ENCODE measurements at regions of chr11 and their contacts with region 1.

Region 1: DNA sequence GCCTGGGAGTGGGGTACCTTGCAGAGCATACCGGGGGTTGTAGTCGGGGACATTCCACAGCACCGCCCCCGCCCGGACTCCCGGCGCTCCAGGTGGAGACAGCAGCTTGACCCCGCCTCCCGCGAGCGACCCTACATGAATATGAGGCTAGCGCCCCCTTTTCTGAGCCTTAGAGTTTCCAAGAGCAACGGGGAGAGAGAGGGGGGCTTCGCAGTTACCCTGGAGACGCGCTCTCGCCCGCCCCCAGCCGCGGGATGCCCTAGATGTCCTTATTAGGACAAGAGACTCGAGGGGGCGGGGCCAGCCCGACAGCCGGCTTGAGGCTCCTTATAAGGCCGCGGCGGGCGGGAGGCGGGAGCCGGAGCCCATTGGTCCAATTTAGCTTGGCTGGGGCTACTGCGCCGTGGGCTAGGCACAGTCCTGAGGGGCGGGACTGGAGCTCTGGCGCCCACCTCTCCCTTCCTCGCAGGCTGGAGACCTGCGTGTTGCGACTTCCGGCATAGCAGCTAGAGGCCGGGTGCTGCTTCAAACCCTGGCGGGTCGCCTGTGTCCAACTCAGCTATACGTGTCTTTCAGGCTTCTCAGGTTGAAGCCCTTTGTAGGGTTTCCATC is 927 bp upstream of the MUS81 start:
- DNase-seq: peak; percentile 94 to 96
- ATAC-seq: peak; percentile 65 to 82 (median 66)
- H3K4me3 ChIP-seq: peak overlapping the region; percentile 80
- H3K4me3 Mint-ChIP-seq: peak overlapping the region; percentile 98
- H3K27ac ChIP-seq: peak overlapping the region; percentile 85
- H3K27ac Mint-ChIP-seq: peak overlapping the region; percentile 97 to 98
- H3K4me1 ChIP-seq: peaks cover 51% of the 10 kb centered on the region
- H3K4me1 Mint-ChIP-seq: peaks cover 51 to 64% of the 10 kb centered on the region in 2 donors
- H3K27me3 ChIP-seq: no peaks in the 10 kb centered on the region
- H3K27me3 Mint-ChIP-seq: no peaks in the 10 kb centered on the region
- CTCF ChIP-seq: no peak

Region 2: GRCh38 chr11:65810046-65810868 is 49.0 kb before region 1 on chr11:
- intact Hi-C with region 1: no loop called
- DNase-seq: peak in 1 of 2 donors; percentile 60
- ATAC-seq: peak; percentile 21 to 62 (median 55)
- H3K4me3 ChIP-seq: no peak overlapping the region
- H3K4me3 Mint-ChIP-seq: no peak overlapping the region
- H3K27ac ChIP-seq: no peak overlapping the region
- H3K27ac Mint-ChIP-seq: no peak overlapping the region
- H3K4me1 ChIP-seq: no peaks in the 10 kb centered on the region
- H3K4me1 Mint-ChIP-seq: no peaks in the 10 kb centered on the region
- H3K27me3 ChIP-seq: no peaks in the 10 kb centered on the region
- H3K27me3 Mint-ChIP-seq: peaks cover 0 to 9% of the 10 kb centered on the region in 2 donors
- CTCF ChIP-seq: no peak

Region 3: DNA sequence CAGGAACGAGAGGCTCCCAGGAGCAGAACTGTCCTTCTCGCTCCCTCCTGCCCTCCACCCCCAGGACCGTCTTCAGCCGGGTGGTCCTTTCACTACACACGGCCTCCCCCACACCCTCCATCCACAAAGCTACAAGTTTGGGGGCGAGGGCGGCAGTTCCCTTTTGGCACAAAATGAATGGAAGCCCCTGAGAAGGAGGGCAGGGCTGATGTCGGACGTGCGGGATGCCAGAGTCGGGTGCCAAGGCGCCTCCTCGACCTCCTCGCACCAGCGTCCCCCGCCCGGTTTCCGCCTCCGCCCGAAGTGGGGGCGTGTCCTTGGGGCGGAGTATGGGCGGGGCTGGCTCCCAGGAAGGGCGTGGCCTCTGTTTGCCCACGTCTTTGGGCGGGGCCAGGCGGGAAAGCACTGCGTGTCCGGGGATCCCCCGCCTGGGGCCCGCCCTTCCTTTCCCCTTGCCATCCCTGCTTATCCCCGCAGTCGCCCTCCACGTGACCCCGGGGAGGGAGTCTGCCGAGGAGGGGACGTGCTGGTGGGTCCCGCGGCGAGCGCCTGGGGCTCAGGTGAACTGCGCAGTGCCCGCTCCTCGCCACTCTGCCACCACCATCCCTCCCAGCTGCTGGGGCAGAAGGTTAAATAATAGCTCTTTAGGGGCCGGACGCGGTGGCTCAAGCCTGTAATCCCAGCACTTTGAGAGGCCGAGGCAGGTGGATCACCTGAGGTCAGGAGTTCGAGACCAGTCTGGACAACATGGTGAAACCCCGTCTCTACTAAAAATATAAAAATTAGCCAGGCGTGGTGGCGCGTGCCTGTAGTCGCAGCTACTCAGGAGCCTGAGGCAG is 14.2 kb after region 1 on chr11:
- intact Hi-C with region 1: loop called (anchors 2 kb)
- DNase-seq: peak; percentile 98 to 99
- ATAC-seq: peak; percentile 95 to 99 (median 95)
- H3K4me3 ChIP-seq: peak overlapping the region; percentile 54
- H3K4me3 Mint-ChIP-seq: peak overlapping the region; percentile 96
- H3K27ac ChIP-seq: peak overlapping the region; percentile 93
- H3K27ac Mint-ChIP-seq: peak overlapping the region; percentile 92 to 97
- H3K4me1 ChIP-seq: peaks cover 52% of the 10 kb centered on the region
- H3K4me1 Mint-ChIP-seq: peaks cover 29 to 38% of the 10 kb centered on the region in 2 donors
- H3K27me3 ChIP-seq: no peaks in the 10 kb centered on the region
- H3K27me3 Mint-ChIP-seq: no peaks in the 10 kb centered on the region
- CTCF ChIP-seq: no peak

Region 4: DNA sequence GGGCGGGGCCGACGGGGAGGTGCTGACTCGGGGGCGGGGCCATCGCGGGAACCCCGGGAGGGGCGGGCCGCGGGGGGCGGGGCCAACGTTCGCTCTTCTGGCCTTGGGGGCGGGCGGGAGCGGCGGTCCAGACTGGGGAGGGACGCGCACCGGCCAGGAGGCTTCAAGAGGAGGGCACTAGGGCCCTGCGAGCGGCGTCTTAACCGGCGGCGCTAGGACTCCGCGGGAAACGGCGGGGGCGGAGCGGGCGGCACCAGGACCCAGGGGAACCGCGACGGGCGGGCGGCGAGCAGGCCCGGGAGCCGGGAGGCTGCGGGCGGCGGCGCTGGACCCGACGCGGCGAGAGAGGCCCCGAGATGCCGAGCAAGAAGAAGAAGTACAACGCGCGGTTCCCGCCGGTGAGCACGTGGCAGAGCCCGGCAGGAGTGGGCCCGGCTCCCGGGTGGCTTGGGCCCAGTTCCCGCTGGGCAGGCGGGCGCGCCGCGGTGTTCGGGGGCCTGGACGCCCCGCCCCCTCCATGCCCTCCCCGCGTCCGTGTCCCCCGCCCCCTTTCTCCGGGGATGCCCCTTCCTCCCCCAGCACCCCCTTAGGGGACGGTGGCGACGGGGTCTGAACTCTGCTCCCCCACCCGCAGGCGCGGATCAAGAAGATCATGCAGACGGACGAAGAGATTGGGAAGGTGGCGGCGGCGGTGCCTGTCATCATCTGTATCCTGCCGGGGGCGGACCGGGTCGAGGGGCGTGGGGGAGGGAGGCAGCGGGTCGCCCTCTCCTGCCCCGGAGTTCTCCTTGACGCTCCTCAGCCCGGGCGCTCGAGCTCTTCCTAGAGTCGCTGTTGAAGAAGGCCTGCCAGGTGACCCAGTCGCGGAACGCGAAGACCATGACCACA is 60.1 kb after region 1 on chr11 and contains the start of gene DRAP1:
- intact Hi-C with region 1: loop called (anchors 5 kb)
- DNase-seq: peak; percentile 97 to 98
- ATAC-seq: peak; percentile 88 to 97 (median 90)
- H3K4me3 ChIP-seq: peak within 1 kb of the TSS; percentile 96
- H3K4me3 Mint-ChIP-seq: peak within 1 kb of the TSS; percentile 90
- H3K27ac ChIP-seq: peak within 1 kb of the TSS; percentile 79
- H3K27ac Mint-ChIP-seq: peak within 1 kb of the TSS; percentile 77 to 90
- H3K4me1 ChIP-seq: peaks cover 57% of the 10 kb centered on the region
- H3K4me1 Mint-ChIP-seq: peaks cover 24 to 52% of the 10 kb centered on the region in 2 donors
- H3K27me3 ChIP-seq: no peaks in the 10 kb centered on the region
- H3K27me3 Mint-ChIP-seq: no peaks in the 10 kb centered on the region
- CTCF ChIP-seq: no peak
- total RNA-seq, gene DRAP1: 114 to 115 (median 115) TPM